H1 (cell line): ENCODE measurements at regions of chr11 and their contacts with region 1.

Region 1: GRCh38 chr11:72430741-72431570 is 3.4 kb downstream of the CLPB start:
- DNase-seq: no peak
- H3K4me3 ChIP-seq: no peak overlapping the region
- H3K27ac ChIP-seq: no peak overlapping the region
- H3K4me1 ChIP-seq: peaks cover 0 to 4% (median 1%) of the 10 kb centered on the region in 4 experiments; a peak in 2 of 7 replicates
- H3K27me3 ChIP-seq: no peaks in the 10 kb centered on the region
- CTCF ChIP-seq: peak; percentile 71 to 94 (median 89)
- EP300 ChIP-seq: no peak
- POLR2A ChIP-seq: no peak
- RAD21 ChIP-seq: peak; percentile 98

Region 2: GRCh38 chr11:72091005-72091691 is 339.8 kb before region 1 on chr11:
- CTCF ChIA-PET with region 1: interaction called, 10 read pairs
- POLR2A ChIA-PET with region 1: no interaction called
- DNase-seq: peak; percentile 66 to 89
- H3K4me3 ChIP-seq: no peak overlapping the region
- H3K27ac ChIP-seq: no peak overlapping the region
- H3K4me1 ChIP-seq: peaks cover 0 to 3% (median 1%) of the 10 kb centered on the region in 4 experiments; a peak in 2 of 7 replicates
- H3K27me3 ChIP-seq: no peaks in the 10 kb centered on the region
- CTCF ChIP-seq: peak; percentile 93 to 96 (median 95)
- EP300 ChIP-seq: no peak
- POLR2A ChIP-seq: no peak; a peak in 1 of 3 replicates
- RAD21 ChIP-seq: peak; percentile 87 to 91

Region 3: DNA sequence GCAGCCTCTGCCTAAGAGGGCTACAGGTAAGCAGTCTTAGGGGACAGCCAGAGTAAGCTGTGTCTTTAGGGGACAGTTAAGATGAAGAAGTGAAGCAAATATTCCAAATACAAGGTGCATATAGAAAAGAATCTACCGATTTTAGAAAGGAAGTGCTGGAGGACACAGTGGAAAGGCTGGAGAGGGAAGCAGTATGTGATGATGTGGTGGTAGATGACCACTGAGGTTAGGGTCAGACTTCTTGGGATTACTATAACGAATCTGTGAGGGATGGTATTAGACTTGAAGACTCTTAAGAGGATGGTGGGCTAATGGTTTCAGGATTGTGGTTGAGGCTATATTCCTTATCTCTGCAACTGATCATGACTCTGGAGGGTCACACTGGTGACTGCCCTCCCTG is 147.0 kb before region 1 on chr11:
- CTCF ChIA-PET with region 1: interaction called, 124 read pairs
- POLR2A ChIA-PET with region 1: no interaction called
- DNase-seq: no peak
- H3K4me3 ChIP-seq: no peak overlapping the region
- H3K27ac ChIP-seq: no peak overlapping the region
- H3K4me1 ChIP-seq: no peaks in the 10 kb centered on the region
- H3K27me3 ChIP-seq: no peaks in the 10 kb centered on the region
- CTCF ChIP-seq: no peak
- EP300 ChIP-seq: no peak
- POLR2A ChIP-seq: no peak
- RAD21 ChIP-seq: no peak

Region 4: DNA sequence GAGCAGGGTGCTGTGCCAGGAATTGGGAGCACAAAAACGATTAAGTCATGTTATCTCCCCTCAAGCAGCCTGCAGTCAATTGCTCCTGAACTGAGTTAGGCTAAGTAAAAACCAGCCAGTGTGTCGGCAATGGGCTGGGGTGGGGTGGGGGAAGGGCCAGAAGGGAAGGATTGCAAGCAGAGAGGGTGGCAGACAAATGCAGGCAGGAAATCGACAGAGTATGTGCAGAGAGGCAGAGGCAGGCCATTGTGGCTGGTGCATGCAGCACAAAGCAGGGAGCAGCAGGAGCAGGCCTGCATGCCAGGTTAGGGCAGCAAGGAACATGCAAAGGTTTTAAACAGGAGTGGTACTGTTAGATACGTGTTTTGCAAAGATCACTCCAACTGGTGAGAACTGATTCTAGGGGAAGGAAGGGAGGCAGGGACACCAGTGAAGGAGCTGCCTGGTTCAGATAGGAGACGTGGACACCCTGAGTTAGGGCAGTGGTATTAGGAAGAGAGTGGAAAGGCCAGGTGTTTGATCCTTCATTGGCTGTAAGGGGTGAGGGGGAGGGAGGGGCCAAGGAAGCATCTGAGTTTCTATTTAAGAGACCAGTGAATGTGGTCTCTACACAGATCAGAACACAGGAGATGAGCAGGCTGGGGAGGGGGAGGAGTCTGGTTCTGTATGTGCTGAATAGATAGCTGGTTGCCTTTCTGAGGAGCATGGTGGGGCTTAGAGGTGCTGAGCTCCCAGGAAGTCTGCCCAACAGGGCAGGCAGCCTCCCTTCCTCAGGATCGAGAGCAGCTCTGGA is 116.2 kb before region 1 on chr11:
- CTCF ChIA-PET with region 1: interaction called, 58 read pairs
- POLR2A ChIA-PET with region 1: interaction called, 3 read pairs
- DNase-seq: no peak
- H3K4me3 ChIP-seq: no peak overlapping the region
- H3K27ac ChIP-seq: 0 out of 2 replicates have a peak overlapping the region, but pooled peaks have one; percentile 3
- H3K4me1 ChIP-seq: peaks cover 0 to 8% (median 5%) of the 10 kb centered on the region in 4 experiments; a peak in 6 of 7 replicates
- H3K27me3 ChIP-seq: no peaks in the 10 kb centered on the region
- CTCF ChIP-seq: no peak
- EP300 ChIP-seq: no peak
- POLR2A ChIP-seq: no peak
- RAD21 ChIP-seq: no peak

Region 5: DNA sequence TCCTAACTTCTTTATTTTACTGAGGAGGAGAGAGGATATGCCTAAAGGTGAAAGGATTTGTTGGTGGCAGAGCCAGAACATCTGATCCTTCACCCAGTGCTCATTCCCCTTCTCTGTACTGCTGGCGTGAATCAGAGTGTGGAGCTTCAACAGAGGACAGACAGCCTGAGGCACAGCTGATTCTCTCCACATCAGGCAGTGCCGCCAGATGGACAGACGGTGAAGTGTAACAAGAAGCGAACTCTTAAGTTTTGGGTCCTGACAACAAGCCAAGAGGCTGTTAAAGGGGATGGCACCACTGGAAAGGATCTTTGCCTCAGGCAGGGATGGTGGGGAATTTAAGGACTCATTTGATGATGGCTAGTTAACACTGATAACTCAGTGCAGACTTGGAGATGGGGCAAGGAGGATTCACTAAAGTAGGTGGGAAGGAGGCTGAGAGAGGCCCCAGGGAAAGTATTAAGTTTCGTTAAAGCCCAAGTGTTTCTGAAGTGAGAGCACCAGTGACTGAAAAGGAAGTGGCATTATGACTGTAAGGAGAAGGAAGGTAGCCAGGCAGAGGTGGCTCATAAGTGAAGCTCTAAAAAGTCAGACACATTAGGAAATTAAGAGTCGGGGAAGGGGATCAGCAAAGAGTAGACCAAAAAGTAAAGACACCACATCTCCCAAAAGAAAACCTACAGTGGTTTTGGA is 78.0 kb before region 1 on chr11:
- CTCF ChIA-PET with region 1: interaction called, 128 read pairs
- POLR2A ChIA-PET with region 1: no interaction called
- DNase-seq: peak in 1 of 2 experiments; percentile 17
- H3K4me3 ChIP-seq: no peak overlapping the region
- H3K27ac ChIP-seq: no peak overlapping the region
- H3K4me1 ChIP-seq: peaks cover 0 to 8% (median 0%) of the 10 kb centered on the region in 4 experiments; a peak in 1 of 7 replicates
- H3K27me3 ChIP-seq: no peaks in the 10 kb centered on the region
- CTCF ChIP-seq: peak; percentile 37 to 68 (median 44)
- EP300 ChIP-seq: no peak
- POLR2A ChIP-seq: no peak
- RAD21 ChIP-seq: peak; percentile 63 to 69

Region 6: DNA sequence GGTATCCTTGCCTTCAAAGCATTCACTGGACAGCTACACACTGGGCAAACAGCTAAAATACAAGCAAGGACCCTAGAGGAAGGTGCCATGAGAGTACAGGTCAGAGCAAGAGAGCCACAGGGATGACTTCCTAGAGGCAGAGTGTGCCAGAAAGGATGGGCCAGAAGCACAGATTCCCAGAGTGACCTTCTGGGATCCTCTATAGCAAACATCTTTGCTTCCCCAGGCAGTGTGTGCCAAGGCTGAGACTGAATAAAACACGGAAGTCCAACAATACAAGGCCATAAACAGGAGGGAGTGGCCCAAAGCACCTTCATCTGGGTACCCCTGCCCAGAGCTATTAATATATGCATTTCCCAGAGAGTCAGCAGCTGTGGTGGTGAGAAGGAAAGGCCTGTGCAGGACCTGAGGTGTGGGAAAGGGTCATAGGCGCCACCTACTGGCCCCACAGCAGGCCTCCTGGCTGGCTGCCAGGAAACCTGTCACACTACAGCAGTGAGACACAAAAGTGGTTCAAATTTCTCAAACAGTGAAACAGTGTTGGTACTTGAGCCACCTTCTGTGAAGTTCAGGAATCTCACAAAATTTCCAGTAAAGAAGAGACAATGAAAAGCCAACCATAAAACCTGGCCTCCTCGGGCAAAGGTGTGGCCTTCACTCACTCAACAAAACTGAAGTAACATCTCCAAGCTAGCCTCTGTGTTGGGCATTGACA is 16.9 kb before region 1 on chr11:
- CTCF ChIA-PET with region 1: interaction called, 262 read pairs
- POLR2A ChIA-PET with region 1: interaction called, 3 read pairs
- DNase-seq: peak in 1 of 2 experiments; percentile 79
- H3K4me3 ChIP-seq: no peak overlapping the region
- H3K27ac ChIP-seq: no peak overlapping the region
- H3K4me1 ChIP-seq: peaks cover 0 to 28% (median 13%) of the 10 kb centered on the region in 4 experiments; a peak in 6 of 7 replicates
- H3K27me3 ChIP-seq: no peaks in the 10 kb centered on the region
- CTCF ChIP-seq: peak; percentile 85 to 90 (median 88)
- EP300 ChIP-seq: no peak
- POLR2A ChIP-seq: no peak
- RAD21 ChIP-seq: peak; percentile 83 to 87

Region 7: DNA sequence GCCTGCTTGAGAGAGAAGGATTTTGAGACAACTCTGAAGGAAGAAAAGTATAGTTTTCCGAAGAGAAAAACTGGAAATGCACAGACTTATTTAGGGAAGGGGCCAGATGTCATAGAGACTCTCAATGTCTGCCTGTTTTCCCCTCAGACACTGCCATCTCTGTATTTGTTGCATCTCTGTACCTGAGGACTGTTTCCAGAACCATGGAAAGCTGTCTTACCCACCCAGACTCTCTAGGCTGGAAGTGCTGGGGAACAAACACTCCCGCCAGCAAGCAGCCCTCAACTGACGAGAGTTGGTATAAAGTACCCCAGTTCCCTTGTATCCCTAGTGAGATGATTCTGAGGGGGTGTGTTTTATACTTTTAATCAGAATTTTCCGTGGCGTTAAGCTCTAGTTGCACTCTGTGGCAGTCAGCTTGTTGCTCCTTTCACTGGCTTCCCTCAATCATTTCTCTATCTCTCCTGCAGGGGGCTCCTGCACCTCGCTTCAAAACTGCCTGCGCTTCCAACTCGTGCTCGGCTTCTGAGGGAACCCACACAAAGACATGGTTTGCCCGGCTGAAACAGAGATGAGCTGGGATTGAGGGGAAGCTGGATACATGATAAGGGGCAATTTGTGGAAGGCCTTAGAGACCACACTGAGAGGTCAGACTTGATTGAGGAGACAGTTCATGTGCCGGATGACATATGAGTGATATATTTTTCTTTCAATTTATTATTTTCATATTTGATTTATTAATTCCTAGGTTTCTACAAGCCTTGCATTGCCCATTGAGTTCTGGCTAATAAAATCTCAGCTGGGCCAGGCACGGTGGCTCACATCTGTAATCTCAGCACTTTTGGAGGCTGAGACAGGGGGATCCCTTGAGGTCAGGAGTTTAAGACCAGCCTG is 40.3 kb after region 1 on chr11:
- CTCF ChIA-PET with region 1: interaction called, 10 read pairs
- POLR2A ChIA-PET with region 1: no interaction called
- DNase-seq: peak; percentile 44 to 63
- H3K4me3 ChIP-seq: peak overlapping the region in 1 of 4 experiments; percentile 38; a peak in 1 of 8 replicates
- H3K27ac ChIP-seq: no peak overlapping the region
- H3K4me1 ChIP-seq: peaks cover 0 to 5% (median 0%) of the 10 kb centered on the region in 4 experiments; a peak in 2 of 7 replicates
- H3K27me3 ChIP-seq: peaks cover 0 to 3% (median under 1%) of the 10 kb centered on the region in 4 experiments; a peak in 2 of 7 replicates
- CTCF ChIP-seq: peak; percentile 68 to 85 (median 77)
- EP300 ChIP-seq: no peak
- POLR2A ChIP-seq: no peak
- RAD21 ChIP-seq: peak; percentile 81 to 85

Region 8: GRCh38 chr11:72483412-72484186 is 52.6 kb after region 1 on chr11:
- CTCF ChIA-PET with region 1: no interaction called
- POLR2A ChIA-PET with region 1: no interaction called
- DNase-seq: no peak
- H3K4me3 ChIP-seq: no peak overlapping the region
- H3K27ac ChIP-seq: no peak overlapping the region
- H3K4me1 ChIP-seq: no peaks in the 10 kb centered on the region
- H3K27me3 ChIP-seq: no peaks in the 10 kb centered on the region
- CTCF ChIP-seq: no peak
- EP300 ChIP-seq: no peak
- POLR2A ChIP-seq: no peak
- RAD21 ChIP-seq: no peak

Region 9: GRCh38 chr11:72519220-72519881 is 88.4 kb after region 1 on chr11:
- CTCF ChIA-PET with region 1: no interaction called
- POLR2A ChIA-PET with region 1: no interaction called
- DNase-seq: no peak
- H3K4me3 ChIP-seq: no peak overlapping the region
- H3K27ac ChIP-seq: no peak overlapping the region
- H3K4me1 ChIP-seq: no peaks in the 10 kb centered on the region
- H3K27me3 ChIP-seq: no peaks in the 10 kb centered on the region; a peak in 1 of 7 replicates
- CTCF ChIP-seq: no peak
- EP300 ChIP-seq: no peak
- POLR2A ChIP-seq: no peak
- RAD21 ChIP-seq: no peak

Region 10: DNA sequence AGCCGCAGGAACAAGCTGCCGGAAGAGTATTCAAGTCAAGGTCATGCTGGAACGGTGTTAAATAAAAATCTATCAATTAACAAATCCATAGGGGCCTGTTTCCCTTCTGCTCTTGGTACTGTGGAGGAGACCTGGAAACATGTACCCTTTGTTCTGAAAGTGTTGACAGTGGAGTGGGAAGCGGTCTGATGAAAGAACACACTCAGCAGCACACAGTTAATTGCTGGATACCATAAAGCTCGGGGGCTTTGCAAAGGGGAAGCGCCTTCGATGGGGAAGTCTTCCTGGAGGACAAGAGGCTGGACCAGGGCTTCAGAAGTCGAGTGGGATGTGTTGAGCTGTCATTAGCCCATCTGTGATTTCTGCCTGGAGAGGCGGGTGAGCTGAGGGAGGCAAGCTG is 115.9 kb after region 1 on chr11:
- CTCF ChIA-PET with region 1: no interaction called
- POLR2A ChIA-PET with region 1: no interaction called
- DNase-seq: no peak
- H3K4me3 ChIP-seq: no peak overlapping the region
- H3K27ac ChIP-seq: no peak overlapping the region
- H3K4me1 ChIP-seq: no peaks in the 10 kb centered on the region
- H3K27me3 ChIP-seq: no peaks in the 10 kb centered on the region
- CTCF ChIP-seq: no peak
- EP300 ChIP-seq: no peak
- POLR2A ChIP-seq: no peak
- RAD21 ChIP-seq: no peak

Region 11: GRCh38 chr11:72585762-72586311 is 154.9 kb after region 1 on chr11:
- CTCF ChIA-PET with region 1: no interaction called
- POLR2A ChIA-PET with region 1: no interaction called
- DNase-seq: peak in 1 of 2 experiments; percentile 82
- H3K4me3 ChIP-seq: no peak overlapping the region
- H3K27ac ChIP-seq: no peak overlapping the region
- H3K4me1 ChIP-seq: peaks cover 0 to 7% (median 3%) of the 10 kb centered on the region in 4 experiments; a peak in 4 of 7 replicates
- H3K27me3 ChIP-seq: peaks cover 24 to 73% (median 57%) of the 10 kb centered on the region in 4 experiments
- CTCF ChIP-seq: peak; percentile 84 to 94 (median 90)
- EP300 ChIP-seq: no peak
- POLR2A ChIP-seq: no peak
- RAD21 ChIP-seq: peak; percentile 87 to 89